ENCODE measurements at regions of chr11 and their contacts with region 1.

Region 1: GRCh38 chr11:6377902-6378639 is 12.2 kb upstream of the SMPD1 start:
- DNase-seq: no peak
- ATAC-seq: peak; percentile 38
- H3K4me3 ChIP-seq: no peak overlapping the region
- H3K27ac ChIP-seq: peak overlapping the region in 1 of 2 donors; percentile 71
- H3K4me1 ChIP-seq: peaks cover 0 to 15% of the 10 kb centered on the region in 2 donors
- H3K27me3 ChIP-seq: no peaks in the 10 kb centered on the region
- CTCF ChIP-seq: no peak

Region 2: DNA sequence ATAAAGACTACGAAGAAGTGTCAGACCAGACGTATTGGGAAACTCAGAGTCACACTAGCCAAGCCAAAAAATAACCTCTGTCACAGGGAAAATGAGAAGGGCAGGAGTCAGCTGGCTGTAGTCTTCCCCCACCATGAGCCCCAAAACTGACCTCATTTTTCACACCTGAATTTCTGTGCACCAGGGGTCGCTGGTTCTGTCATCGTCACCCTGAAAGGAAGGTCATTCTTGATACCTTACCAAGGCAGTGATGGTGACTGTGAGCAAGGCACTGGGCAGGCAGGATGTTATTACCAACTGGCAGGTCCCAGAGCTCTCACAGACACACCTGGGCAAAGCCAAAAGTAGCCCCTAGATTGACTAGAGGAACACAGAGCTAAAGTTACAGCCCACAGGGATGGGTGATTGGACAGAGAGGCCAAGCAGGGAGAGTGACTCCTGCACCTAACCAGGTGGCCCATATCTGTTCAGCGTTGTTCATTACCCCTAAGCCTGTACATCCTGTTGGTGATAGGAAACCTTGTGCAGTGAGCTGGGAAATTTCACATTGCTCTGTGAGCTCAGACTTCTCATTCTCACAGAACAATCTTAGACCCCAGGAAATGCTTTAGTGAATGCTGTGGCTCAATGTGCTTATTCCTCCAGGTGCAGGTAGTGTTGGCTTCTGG is 315.2 kb before region 1 on chr11:
- intact Hi-C with region 1: no loop called
- DNase-seq: no peak
- ATAC-seq: no peak
- H3K4me3 ChIP-seq: no peak overlapping the region
- H3K27ac ChIP-seq: no peak overlapping the region
- H3K4me1 ChIP-seq: no peaks in the 10 kb centered on the region
- H3K27me3 ChIP-seq: no peaks in the 10 kb centered on the region
- CTCF ChIP-seq: no peak

Region 3: DNA sequence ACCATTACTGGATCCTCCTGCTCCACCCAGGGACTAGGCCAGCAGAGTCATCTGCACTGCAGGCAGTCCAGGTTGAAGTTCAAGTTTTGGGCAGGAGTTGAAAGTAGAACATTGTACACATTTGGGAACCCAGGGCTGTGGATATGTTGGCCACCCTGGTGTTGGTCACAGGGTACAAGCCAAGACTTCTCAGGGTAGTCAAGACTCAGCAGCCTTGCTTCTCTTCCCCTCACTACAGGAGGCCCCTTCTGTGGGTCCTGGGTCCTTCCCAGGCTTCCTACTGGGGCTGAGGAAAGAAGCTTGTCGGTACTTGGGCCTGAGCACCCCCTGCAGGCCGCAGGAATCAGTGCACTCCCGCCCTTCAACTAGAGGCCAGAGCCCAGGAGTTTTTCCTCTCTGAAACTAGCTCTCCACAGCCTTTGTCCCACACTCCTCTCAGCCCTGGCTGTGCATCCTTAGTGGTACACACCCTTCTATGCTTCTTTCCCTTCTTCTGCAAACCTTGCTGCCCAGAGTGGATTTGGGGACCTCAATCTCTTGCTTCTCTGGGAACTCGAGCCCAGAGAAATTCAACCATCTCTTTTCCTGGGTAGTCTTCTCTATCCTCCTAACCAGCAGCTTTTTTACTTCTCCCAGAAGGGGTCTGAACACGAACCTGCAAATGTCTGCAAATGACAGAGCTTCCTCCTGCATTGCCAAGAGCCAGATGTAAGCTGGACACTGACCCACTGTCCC is 65.4 kb after region 1 on chr11:
- intact Hi-C with region 1: loop called in 1 of 2 experiments (anchors 5 kb)
- DNase-seq: peak; percentile 22 to 81 (median 54)
- ATAC-seq: peak; percentile 90
- H3K4me3 ChIP-seq: no peak overlapping the region
- H3K27ac ChIP-seq: no peak overlapping the region
- H3K4me1 ChIP-seq: no peaks in the 10 kb centered on the region
- H3K27me3 ChIP-seq: no peaks in the 10 kb centered on the region
- CTCF ChIP-seq: peak; percentile 82 to 88

Region 4: GRCh38 chr11:6505577-6506240 is 127.6 kb after region 1 on chr11:
- intact Hi-C with region 1: loop called in 1 of 2 experiments (anchors 5 kb)
- DNase-seq: peak in 2 of 4 donors; percentile 10 to 39
- ATAC-seq: peak; percentile 84
- H3K4me3 ChIP-seq: no peak overlapping the region
- H3K27ac ChIP-seq: no peak overlapping the region
- H3K4me1 ChIP-seq: no peaks in the 10 kb centered on the region
- H3K27me3 ChIP-seq: no peaks in the 10 kb centered on the region
- CTCF ChIP-seq: peak; percentile 63 to 64

Measured in left lung (tissue), 14 donors.